Aorta (tissue), 5 donors: ENCODE measurements at regions of chr3 and their contacts with region 1.

Region 1: GRCh38 chr3:107235928-107236315 is 141.3 kb upstream of the CCDC54 start:
- DNase-seq: no peak
- ATAC-seq: peak; percentile 93
- H3K4me3 ChIP-seq: peak overlapping the region; percentile 88 to 97
- H3K27ac ChIP-seq: no peak overlapping the region
- H3K4me1 ChIP-seq: no peaks in the 10 kb centered on the region
- H3K27me3 ChIP-seq: no peaks in the 10 kb centered on the region

Region 2: DNA sequence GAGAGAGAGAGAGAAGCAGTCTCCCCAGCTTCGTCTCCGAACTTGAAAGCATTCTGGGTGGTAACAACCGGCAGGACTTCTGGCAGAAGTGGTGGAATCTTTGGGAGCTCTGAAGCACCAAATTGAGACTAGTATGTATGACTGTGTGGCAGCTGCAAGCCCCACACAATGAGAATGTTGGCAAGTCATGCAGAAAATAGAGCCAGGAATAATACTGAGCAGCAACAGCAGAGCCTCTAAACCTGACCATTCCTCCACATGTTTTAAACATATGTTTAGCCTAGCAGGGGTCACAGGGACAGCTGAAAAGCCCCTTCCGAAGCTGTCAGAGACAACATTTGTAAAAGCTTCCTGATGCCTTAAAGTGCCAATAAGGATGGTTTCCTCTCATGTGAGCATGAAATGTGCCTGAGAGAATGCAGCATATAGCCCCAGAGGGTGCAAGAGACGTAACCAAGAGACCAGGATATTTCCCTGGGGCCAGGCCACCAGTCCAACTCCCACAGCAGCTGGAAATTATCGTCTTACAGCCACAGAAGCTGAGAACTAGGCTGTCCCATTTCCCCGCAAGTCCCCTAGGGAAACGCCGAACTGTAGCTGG is 37.2 kb before region 1 on chr3:
- intact Hi-C with region 1: no loop called
- DNase-seq: peak in 1 of 2 donors; percentile 46
- ATAC-seq: peak; percentile 86
- H3K4me3 ChIP-seq: peak overlapping the region; percentile 3 to 16
- H3K27ac ChIP-seq: peak overlapping the region in 1 of 2 donors; percentile 56
- H3K4me1 ChIP-seq: peaks cover 2 to 4% of the 10 kb centered on the region in 2 donors
- H3K27me3 ChIP-seq: no peaks in the 10 kb centered on the region

Region 3: DNA sequence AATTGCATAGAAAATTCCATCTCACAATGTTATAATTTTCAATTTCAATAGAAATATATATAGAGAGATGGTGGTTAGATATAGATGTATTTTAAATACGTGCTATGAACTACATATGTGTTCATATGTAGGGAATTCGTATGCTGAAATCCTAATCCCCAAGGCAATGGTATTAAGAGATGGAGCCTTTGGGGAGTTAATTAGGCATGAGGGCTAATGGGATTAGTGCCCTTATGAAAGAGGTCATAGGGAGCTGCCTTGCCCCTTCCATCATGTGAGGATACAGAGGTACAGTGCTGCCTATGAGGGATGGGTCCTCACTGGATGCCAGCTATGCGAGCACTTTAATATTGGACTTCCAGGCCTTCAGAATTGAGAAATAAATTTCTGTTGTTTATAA is 61.7 kb after region 1 on chr3:
- intact Hi-C with region 1: no loop called
- DNase-seq: no peak
- ATAC-seq: no peak
- H3K4me3 ChIP-seq: no peak overlapping the region
- H3K27ac ChIP-seq: no peak overlapping the region
- H3K4me1 ChIP-seq: no peaks in the 10 kb centered on the region
- H3K27me3 ChIP-seq: no peaks in the 10 kb centered on the region

Region 4: DNA sequence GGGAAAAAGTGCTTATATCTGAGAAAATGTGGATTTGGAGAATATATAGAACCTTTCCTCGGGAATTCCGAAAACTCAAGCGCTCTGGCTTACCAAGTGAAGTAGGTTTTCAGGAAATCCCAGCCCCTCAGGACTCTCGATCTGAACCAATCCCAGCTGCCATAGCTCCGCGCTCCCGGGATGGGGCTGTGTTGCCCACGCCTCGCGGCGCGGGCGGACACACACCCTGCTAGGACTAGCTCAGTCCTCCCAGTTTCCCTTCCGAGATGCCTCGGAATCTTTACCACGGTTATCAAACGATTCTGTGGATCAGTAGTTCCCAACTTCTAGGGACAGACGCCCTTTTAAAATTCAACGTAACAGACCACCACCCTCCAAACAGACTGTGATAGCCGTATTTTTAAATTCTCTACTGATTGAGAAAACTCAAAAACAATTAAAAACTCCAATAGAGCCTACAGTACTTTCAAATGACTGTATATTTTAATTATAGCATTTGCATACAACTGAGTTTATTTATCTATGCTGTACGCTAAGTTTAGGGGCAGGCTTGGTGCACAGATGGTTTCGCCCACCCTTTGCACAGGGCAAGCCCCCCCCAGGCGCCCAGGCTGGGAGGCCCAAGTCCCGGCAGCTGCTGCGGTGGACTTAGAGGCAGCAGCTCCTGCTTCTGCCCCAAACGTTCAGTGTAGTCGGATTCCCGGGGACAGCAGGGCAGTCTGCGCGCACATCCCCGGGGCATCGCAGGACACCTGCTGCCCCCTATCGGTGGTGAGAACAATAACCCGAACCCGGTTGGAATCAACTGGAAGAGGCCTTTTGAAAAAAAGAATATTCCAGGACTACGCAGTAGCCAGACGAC is 193.6 kb after region 1 on chr3:
- intact Hi-C with region 1: loop called (anchors 2 to 5 kb)
- DNase-seq: peak; percentile 84 to 88
- ATAC-seq: peak; percentile 93
- H3K4me3 ChIP-seq: peak overlapping the region; percentile 74 to 97
- H3K27ac ChIP-seq: peak overlapping the region; percentile 84 to 89
- H3K4me1 ChIP-seq: no peaks in the 10 kb centered on the region
- H3K27me3 ChIP-seq: no peaks in the 10 kb centered on the region

Region 5: DNA sequence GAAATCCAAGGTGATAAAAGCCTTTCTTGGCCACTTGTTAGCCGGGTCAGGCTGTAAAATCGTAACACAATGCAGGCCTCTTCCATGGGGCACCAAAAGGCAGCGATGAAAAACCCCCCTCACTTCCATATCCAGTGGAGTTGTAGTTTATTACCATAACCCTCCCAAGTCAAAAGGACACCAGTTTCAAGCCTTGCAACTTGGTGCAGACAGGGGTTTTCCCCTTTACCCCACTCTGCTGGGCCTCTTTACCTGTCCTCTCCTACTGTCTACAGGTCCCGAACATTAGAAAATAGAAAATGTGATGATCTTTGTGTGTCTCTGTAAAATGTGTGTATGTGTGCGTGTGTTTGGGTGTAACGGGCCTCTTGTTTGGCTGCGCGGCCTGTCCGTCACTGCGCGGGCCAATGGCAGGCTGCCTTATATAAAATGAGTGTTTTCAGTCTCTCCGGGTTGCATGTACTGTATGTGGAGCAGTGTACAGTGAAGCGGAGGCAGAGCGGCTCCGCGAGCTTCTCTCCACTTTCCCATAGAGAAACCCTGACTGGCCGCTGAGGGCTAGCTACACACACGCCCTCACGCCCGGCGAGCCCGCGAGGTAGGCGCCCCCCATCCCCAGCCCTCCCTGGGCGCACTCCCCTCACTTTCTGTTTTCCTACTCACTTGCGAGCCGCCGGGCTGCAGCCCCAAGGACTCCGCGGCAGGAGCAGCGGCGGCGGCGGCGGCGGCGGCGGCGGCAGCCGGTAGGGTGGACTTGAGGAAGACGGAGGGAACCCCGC is 286.8 kb after region 1 on chr3 and contains the start of gene BBX:
- intact Hi-C with region 1: loop called (anchors 10 kb)
- DNase-seq: peak; percentile 92 to 95
- ATAC-seq: peak; percentile 97
- H3K4me3 ChIP-seq: peak within 1 kb of the TSS; percentile 94
- H3K27ac ChIP-seq: peak within 1 kb of the TSS; percentile 57 to 70
- H3K4me1 ChIP-seq: no peaks in the 10 kb centered on the region
- H3K27me3 ChIP-seq: no peaks in the 10 kb centered on the region
- total RNA-seq, gene BBX: 76.7 to 77.8 TPM

Region 6: GRCh38 chr3:107740992-107741896 is 505.3 kb after region 1 on chr3:
- intact Hi-C with region 1: loop called (anchors 5 to 10 kb)
- DNase-seq: no peak
- ATAC-seq: peak; percentile 41
- H3K4me3 ChIP-seq: no peak overlapping the region
- H3K27ac ChIP-seq: no peak overlapping the region
- H3K4me1 ChIP-seq: no peaks in the 10 kb centered on the region
- H3K27me3 ChIP-seq: no peaks in the 10 kb centered on the region

Region 7: GRCh38 chr3:107846279-107846852 is 610.4 kb after region 1 on chr3:
- intact Hi-C with region 1: loop called in 1 of 2 experiments (anchors 10 kb)
- DNase-seq: peak; percentile 78 to 91
- ATAC-seq: peak; percentile 83
- H3K4me3 ChIP-seq: no peak overlapping the region
- H3K27ac ChIP-seq: no peak overlapping the region
- H3K4me1 ChIP-seq: peaks cover 0 to 4% of the 10 kb centered on the region in 2 donors
- H3K27me3 ChIP-seq: no peaks in the 10 kb centered on the region